ENCODE measurements at regions of chr19 and their contacts with region 1.

Region 1: GRCh38 chr19:40603389-40604135 is 2.4 kb downstream of the LTBP4 start:
- DNase-seq: peak in 1 of 2 experiments; percentile 97
- H3K4me3 ChIP-seq: peak overlapping the region; percentile 10 to 65 (median 17); a peak in 6 of 8 replicates
- H3K27ac ChIP-seq: no peak overlapping the region
- H3K4me1 ChIP-seq: peaks cover 9 to 43% (median 27%) of the 10 kb centered on the region in 4 experiments
- H3K27me3 ChIP-seq: peaks cover 13 to 57% (median 52%) of the 10 kb centered on the region in 4 experiments
- CTCF ChIP-seq: 0 out of 4 replicates have a peak, but pooled peaks of 1 of the 3 experiments have one; percentile 5
- EP300 ChIP-seq: peak in 1 of 2 experiments; percentile 73; a peak in 1 of 3 replicates
- POLR2A ChIP-seq: no peak
- RAD21 ChIP-seq: no peak; a peak in 1 of 4 replicates

Region 2: GRCh38 chr19:40285353-40286234 is 318.0 kb before region 1 on chr19:
- CTCF ChIA-PET with region 1: no interaction called
- POLR2A ChIA-PET with region 1: no interaction called
- DNase-seq: peak; percentile 95 to 98
- H3K4me3 ChIP-seq: peak overlapping the region; percentile 56 to 98 (median 80)
- H3K27ac ChIP-seq: peak overlapping the region; percentile 96
- H3K4me1 ChIP-seq: peaks cover 0 to 16% (median 12%) of the 10 kb centered on the region in 4 experiments; a peak in 6 of 7 replicates
- H3K27me3 ChIP-seq: no peaks in the 10 kb centered on the region
- CTCF ChIP-seq: no peak
- EP300 ChIP-seq: no peak
- POLR2A ChIP-seq: no peak; a peak in 1 of 3 replicates
- RAD21 ChIP-seq: no peak

Region 3: GRCh38 chr19:40529093-40529954 is 74.2 kb before region 1 on chr19:
- CTCF ChIA-PET with region 1: interaction called, 11 read pairs
- POLR2A ChIA-PET with region 1: interaction called, 4 read pairs
- DNase-seq: peak; percentile 80 to 96
- H3K4me3 ChIP-seq: peak overlapping the region; percentile 24 to 62 (median 44); a peak in 7 of 8 replicates
- H3K27ac ChIP-seq: no peak overlapping the region
- H3K4me1 ChIP-seq: peaks cover 0 to 7% (median 4%) of the 10 kb centered on the region in 4 experiments; a peak in 6 of 7 replicates
- H3K27me3 ChIP-seq: peaks cover 0 to 4% (median 0%) of the 10 kb centered on the region in 4 experiments; a peak in 2 of 7 replicates
- CTCF ChIP-seq: peak; percentile 87 to 96 (median 93)
- EP300 ChIP-seq: no peak
- POLR2A ChIP-seq: no peak
- RAD21 ChIP-seq: peak; percentile 35 to 39; a peak in 2 of 4 replicates

Region 4: DNA sequence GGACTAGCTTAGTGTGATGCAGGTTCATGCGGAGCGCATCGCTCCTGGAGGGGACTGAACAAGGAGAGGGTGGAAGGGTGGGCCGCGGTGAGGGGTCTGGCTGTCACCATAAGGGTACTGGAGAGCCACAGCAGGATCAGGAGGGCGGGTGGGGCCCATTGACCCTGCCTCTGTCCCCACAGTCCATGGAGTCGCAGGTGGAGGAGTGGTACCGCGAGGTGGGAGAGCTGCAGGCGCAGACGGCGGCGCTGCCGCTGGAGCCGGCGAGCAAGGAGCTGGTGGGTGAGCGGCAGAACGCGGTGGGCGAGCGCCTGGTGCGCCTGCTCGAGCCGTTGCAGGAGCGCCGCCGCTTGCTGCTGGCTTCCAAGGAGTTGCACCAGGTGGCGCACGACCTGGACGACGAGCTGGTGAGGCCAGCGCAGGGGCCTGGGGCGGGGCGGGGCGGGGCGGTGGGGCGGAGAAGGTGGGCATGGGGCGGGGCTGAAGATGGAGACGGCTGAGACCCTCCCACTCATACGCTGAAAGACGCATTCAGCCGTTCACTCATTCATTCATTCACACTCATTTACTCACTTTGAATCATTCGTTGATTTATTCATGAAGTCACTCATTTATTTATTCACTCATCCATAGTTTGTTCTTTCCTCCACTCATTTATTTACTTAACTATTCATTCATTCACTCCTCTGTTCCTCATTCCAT is 54.4 kb before region 1 on chr19:
- CTCF ChIA-PET with region 1: interaction called, 35 read pairs
- POLR2A ChIA-PET with region 1: interaction called, 3 read pairs
- DNase-seq: peak; percentile 73 to 92
- H3K4me3 ChIP-seq: peak overlapping the region in 3 of 4 experiments; percentile 31 to 49 (median 40); a peak in 7 of 8 replicates
- H3K27ac ChIP-seq: no peak overlapping the region
- H3K4me1 ChIP-seq: peaks cover 0 to 1% (median 0%) of the 10 kb centered on the region in 4 experiments; a peak in 3 of 7 replicates
- H3K27me3 ChIP-seq: peaks cover 0 to 26% (median 24%) of the 10 kb centered on the region in 4 experiments; a peak in 6 of 7 replicates
- CTCF ChIP-seq: peak; percentile 66 to 81 (median 80)
- EP300 ChIP-seq: no peak
- POLR2A ChIP-seq: no peak
- RAD21 ChIP-seq: peak; percentile 45 to 59

Region 5: DNA sequence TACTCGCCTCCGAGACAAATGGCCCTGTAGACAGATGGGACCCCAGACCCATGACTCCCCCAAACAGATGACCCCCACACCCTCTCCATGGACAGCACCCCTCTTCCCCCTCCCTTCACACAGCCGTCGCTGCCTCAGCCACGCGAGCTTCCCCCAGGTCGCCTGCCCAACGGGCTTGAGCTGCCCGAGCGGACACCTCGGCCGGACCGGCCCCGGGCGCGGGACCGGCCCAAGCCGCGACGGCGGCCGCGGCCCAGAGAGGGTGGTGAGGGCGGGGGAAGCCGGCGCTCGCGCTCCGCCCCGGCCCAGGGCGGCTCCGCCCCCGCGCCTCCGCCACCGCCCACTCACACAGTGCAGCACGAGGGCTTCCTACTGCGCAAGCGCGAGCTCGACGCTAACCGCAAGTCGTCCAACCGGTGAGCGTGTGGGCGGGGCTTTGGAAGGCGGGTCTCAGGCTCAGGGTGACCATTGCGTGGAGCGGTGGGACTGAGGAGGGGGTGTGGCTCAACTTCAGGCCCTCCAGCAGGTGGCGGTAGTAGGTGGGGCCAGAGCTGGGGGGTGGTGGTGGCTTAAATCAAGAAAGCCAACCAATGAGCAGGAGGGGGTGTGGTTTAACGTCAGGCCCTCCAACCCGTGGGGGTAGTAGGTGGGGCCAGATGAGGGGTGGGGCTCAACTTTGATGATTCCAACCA is 33.1 kb before region 1 on chr19:
- CTCF ChIA-PET with region 1: interaction called, 11 read pairs
- POLR2A ChIA-PET with region 1: interaction called, 4 read pairs
- DNase-seq: peak; percentile 99 to 100
- H3K4me3 ChIP-seq: peak overlapping the region; percentile 42 to 74 (median 45)
- H3K27ac ChIP-seq: no peak overlapping the region
- H3K4me1 ChIP-seq: peaks cover 2 to 13% (median 4%) of the 10 kb centered on the region in 4 experiments
- H3K27me3 ChIP-seq: peaks cover 32 to 49% (median 46%) of the 10 kb centered on the region in 4 experiments
- CTCF ChIP-seq: peak; percentile 42 to 62 (median 58)
- EP300 ChIP-seq: no peak
- POLR2A ChIP-seq: no peak
- RAD21 ChIP-seq: peak; percentile 17 to 36; a peak in 2 of 4 replicates

Region 6: GRCh38 chr19:40592170-40592569 is 11.4 kb before region 1 on chr19:
- CTCF ChIA-PET with region 1: interaction called, 14 read pairs
- POLR2A ChIA-PET with region 1: interaction called, 11 read pairs
- DNase-seq: no peak
- H3K4me3 ChIP-seq: no peak overlapping the region
- H3K27ac ChIP-seq: no peak overlapping the region
- H3K4me1 ChIP-seq: peaks cover 0 to 7% (median 3%) of the 10 kb centered on the region in 4 experiments; a peak in 5 of 7 replicates
- H3K27me3 ChIP-seq: peaks cover 5 to 10% (median 9%) of the 10 kb centered on the region in 4 experiments
- CTCF ChIP-seq: no peak
- EP300 ChIP-seq: no peak
- POLR2A ChIP-seq: no peak
- RAD21 ChIP-seq: no peak

Region 7: GRCh38 chr19:40623403-40624251 is 20.1 kb after region 1 on chr19:
- CTCF ChIA-PET with region 1: interaction called, 11 read pairs
- POLR2A ChIA-PET with region 1: interaction called, 8 read pairs
- DNase-seq: peak in 1 of 2 experiments; percentile 100
- H3K4me3 ChIP-seq: peak overlapping the region; percentile 6 to 53 (median 42); a peak in 7 of 8 replicates
- H3K27ac ChIP-seq: no peak overlapping the region; the same call in 1 of the 2 replicates
- H3K4me1 ChIP-seq: peaks cover 0 to 18% (median 8%) of the 10 kb centered on the region in 4 experiments; a peak in 6 of 7 replicates
- H3K27me3 ChIP-seq: no peaks in the 10 kb centered on the region; a peak in 1 of 7 replicates
- CTCF ChIP-seq: peak in 1 of 3 experiments; percentile 1; a peak in 1 of 4 replicates
- EP300 ChIP-seq: no peak
- POLR2A ChIP-seq: peak in 1 of 2 experiments; percentile 63; a peak in 2 of 3 replicates
- RAD21 ChIP-seq: 0 out of 4 replicates have a peak, but pooled peaks of 1 of the 2 experiments have one; percentile 0